Aorta (tissue), 5 donors: ENCODE measurements at regions of chr2 and their contacts with region 1.

Region 1: DNA sequence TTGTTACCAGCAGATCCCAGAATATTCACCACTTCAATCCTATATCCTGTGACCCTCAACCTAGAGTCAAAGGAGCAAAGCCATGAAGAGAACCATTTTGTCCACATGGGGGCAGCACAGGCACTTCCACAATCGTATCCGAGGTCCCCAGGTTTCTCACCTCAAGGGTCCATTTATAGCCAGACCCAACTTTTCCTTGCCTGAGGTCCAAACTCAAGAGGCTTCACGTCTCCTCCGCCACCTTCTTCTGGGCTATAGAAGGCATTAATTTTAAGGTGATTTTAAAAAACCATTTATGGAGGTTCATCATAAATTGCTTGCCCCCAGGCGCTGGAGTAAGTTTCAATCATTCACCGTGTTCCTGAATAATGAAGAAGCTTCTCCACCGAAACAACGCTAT is 111.6 kb upstream of the NABP1 start:
- DNase-seq: peak in 1 of 2 donors; percentile 64
- ATAC-seq: peak; percentile 78
- H3K4me3 ChIP-seq: no peak overlapping the region
- H3K27ac ChIP-seq: no peak overlapping the region
- H3K4me1 ChIP-seq: no peaks in the 10 kb centered on the region
- H3K27me3 ChIP-seq: no peaks in the 10 kb centered on the region

Region 2: DNA sequence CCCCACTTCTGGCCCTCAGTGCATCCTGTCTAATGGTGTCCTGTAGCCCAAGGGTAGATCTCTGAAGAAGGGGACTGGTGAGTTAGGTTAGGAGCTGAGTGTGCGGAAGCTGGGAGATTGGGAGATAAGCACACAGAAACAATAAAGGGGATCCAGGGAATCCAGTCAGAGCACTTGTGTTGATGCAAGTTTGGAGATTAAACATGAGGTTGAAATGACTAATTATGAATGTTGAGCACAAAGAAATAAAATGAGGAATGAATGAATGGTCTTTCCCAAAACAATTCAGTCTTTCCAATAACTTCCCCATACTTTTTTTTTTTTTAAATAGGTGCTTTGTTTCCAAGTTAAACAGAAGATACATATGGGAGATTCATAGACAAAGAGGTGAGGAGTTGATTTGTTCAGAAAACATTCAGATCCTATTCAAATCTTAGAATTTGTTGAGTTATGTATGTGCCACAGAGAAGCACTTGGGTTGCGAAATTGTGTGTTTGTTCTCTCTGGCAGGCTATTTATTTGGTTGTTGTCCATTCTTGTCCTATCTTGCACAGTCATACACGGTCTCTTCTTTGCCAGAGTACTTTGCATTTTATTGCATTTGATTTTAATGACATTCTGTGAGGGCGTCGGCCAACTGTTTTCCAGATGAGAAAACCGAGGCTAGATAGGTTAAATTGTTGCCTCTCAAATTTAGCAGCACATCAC is 80.0 kb after region 1 on chr2:
- intact Hi-C with region 1: no loop called
- DNase-seq: no peak
- ATAC-seq: no peak
- H3K4me3 ChIP-seq: no peak overlapping the region
- H3K27ac ChIP-seq: no peak overlapping the region
- H3K4me1 ChIP-seq: no peaks in the 10 kb centered on the region
- H3K27me3 ChIP-seq: no peaks in the 10 kb centered on the region

Region 3: GRCh38 chr2:191789796-191790195 is 223.5 kb after region 1 on chr2:
- intact Hi-C with region 1: loop called in 1 of 2 experiments (anchors 10 kb)
- DNase-seq: no peak
- ATAC-seq: no peak
- H3K4me3 ChIP-seq: no peak overlapping the region
- H3K27ac ChIP-seq: no peak overlapping the region
- H3K4me1 ChIP-seq: no peaks in the 10 kb centered on the region
- H3K27me3 ChIP-seq: no peaks in the 10 kb centered on the region